ENCODE measurements at regions of chr1 and their contacts with region 1.

Region 1: GRCh38 chr1:221741711-221742554 is at the start of gene DUSP10:
- DNase-seq: peak; percentile 97 to 100 (median 100)
- H3K4me3 ChIP-seq: peak within 1 kb of the TSS; percentile 95 to 96
- H3K4me3 Mint-ChIP-seq: peak within 1 kb of the TSS in 3 of 8 donors; percentile 79 to 87 (median 86)
- H3K27ac ChIP-seq: peak within 1 kb of the TSS; percentile 98
- H3K27ac Mint-ChIP-seq: peak within 1 kb of the TSS in 4 of 7 donors; percentile 72 to 98 (median 92)
- H3K4me1 ChIP-seq: peaks cover 38% of the 10 kb centered on the region
- H3K4me1 Mint-ChIP-seq: peaks cover 0 to 36% (median 17%) of the 10 kb centered on the region in 4 donors
- H3K27me3 ChIP-seq: no peaks in the 10 kb centered on the region
- H3K27me3 Mint-ChIP-seq: no peaks in the 10 kb centered on the region
- total RNA-seq, gene DUSP10: 3.8 to 4.1 TPM

Region 2: GRCh38 chr1:221435504-221435904 is 306.4 kb before region 1 on chr1:
- CTCF ChIA-PET with region 1: interaction called, 3 read pairs
- POLR2A ChIA-PET with region 1: interaction called, 4 read pairs
- intact Hi-C with region 1: loop called (anchors 1 kb)
- DNase-seq: peak in 4 of 5 donors; percentile 34 to 45 (median 36)
- H3K4me3 ChIP-seq: no peak overlapping the region
- H3K4me3 Mint-ChIP-seq: peak overlapping the region in 1 of 8 donors; percentile 22
- H3K27ac ChIP-seq: no peak overlapping the region
- H3K27ac Mint-ChIP-seq: no peak overlapping the region
- H3K4me1 ChIP-seq: peaks cover 16% of the 10 kb centered on the region
- H3K4me1 Mint-ChIP-seq: peaks cover 13 to 29% (median 19%) of the 10 kb centered on the region in 4 donors
- H3K27me3 ChIP-seq: no peaks in the 10 kb centered on the region
- H3K27me3 Mint-ChIP-seq: peaks cover 0 to 4% of the 10 kb centered on the region in 2 donors

Region 3: GRCh38 chr1:221689138-221689537 is 52.8 kb before region 1 on chr1:
- CTCF ChIA-PET with region 1: no interaction called
- POLR2A ChIA-PET with region 1: interaction called, 12 read pairs
- intact Hi-C with region 1: no loop called
- DNase-seq: peak in 3 of 5 donors; percentile 31 to 56 (median 38)
- H3K4me3 ChIP-seq: no peak overlapping the region
- H3K4me3 Mint-ChIP-seq: peak overlapping the region in 1 of 8 donors; percentile 7
- H3K27ac ChIP-seq: no peak overlapping the region
- H3K27ac Mint-ChIP-seq: peak overlapping the region; percentile 11 to 87 (median 67)
- H3K4me1 ChIP-seq: no peaks in the 10 kb centered on the region
- H3K4me1 Mint-ChIP-seq: peaks cover 3 to 13% (median 6%) of the 10 kb centered on the region in 4 donors
- H3K27me3 ChIP-seq: no peaks in the 10 kb centered on the region
- H3K27me3 Mint-ChIP-seq: no peaks in the 10 kb centered on the region

Region 4: DNA sequence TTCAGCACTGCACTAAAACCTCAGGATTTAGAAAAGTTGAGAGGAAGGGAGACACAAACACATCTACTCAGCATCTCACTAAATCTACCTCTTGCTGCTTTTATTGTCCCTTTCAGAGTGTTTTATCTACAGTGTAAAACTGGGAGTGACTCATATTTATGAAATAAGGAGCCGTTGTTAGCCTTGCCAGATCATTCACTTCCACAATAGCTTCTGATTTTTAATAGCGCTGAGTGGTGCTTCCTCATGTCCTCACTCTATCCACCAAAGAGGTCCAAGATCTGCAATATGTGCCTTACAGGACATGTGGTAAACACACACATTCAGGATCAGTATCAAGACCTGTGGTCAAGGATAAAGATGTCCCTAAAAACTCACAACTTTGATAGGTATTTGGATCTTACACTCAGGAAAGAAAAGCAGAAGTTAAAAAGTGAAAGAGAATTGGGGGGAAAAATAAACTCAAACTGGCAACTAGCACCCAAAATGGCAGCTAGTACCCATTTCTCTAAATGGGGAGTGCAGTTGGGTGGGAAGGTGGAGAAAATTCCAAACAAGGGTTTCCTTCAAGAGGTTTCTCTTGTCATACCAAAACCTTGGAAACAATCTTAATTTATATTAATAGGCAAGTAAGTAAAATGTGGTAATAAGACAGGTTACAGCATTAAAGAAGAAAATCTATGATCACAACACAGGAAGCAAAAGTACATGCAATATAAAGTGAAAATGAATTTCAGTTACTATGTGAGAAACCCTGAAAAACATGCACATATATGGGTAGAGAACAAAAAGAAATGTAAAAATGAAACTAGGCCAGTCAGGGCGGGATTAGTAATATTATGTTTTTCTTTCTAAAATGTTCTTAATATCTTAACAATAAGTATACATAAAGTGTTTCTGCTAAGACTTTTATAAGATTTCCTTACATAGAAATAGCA is 15.9 kb before region 1 on chr1:
- CTCF ChIA-PET with region 1: interaction called, 18 read pairs
- POLR2A ChIA-PET with region 1: interaction called, 51 read pairs
- intact Hi-C with region 1: loop called (anchors 1 kb)
- DNase-seq: peak in 4 of 5 donors; percentile 30 to 38 (median 34)
- H3K4me3 ChIP-seq: no peak overlapping the region
- H3K4me3 Mint-ChIP-seq: peak overlapping the region in 7 of 8 donors; percentile 44 to 82 (median 57)
- H3K27ac ChIP-seq: peak overlapping the region; percentile 25
- H3K27ac Mint-ChIP-seq: peak overlapping the region; percentile 7 to 83 (median 48)
- H3K4me1 ChIP-seq: peaks cover 58% of the 10 kb centered on the region
- H3K4me1 Mint-ChIP-seq: peaks cover 36 to 61% (median 48%) of the 10 kb centered on the region in 4 donors
- H3K27me3 ChIP-seq: no peaks in the 10 kb centered on the region
- H3K27me3 Mint-ChIP-seq: no peaks in the 10 kb centered on the region

Region 5: DNA sequence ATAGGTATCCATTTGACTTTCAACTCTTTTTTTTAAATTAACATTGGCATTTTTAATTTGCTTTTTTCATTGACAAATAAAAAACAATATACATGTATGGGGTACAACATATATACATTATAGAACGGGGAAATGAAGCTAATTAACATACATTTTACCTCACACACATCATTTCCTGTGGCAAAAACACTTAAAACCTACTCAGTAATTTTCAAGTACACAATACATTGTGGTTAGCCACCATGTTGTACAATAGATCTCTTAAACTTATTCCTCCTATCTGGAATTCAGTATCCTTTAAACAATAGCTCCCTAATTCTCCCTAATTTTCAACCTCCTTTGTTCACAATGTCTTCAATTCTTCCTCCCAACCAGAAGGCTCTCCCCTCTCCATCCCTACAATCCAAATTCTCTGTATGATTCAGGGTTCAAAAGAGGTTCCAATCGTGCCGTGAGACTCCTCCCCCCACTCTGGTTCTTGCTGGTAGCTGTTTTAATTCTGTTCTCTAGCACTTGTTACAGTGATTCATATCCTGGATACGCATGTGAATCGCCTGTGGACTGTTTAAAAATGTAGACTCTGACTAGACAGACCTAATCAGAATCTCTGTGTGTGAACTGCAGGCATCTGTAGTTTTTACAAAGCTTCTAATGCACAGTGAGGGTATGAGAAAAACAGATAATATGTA is 87.5 kb after region 1 on chr1:
- CTCF ChIA-PET with region 1: interaction called, 3 read pairs
- POLR2A ChIA-PET with region 1: interaction called, 26 read pairs
- intact Hi-C with region 1: loop called (anchors 5 kb)
- DNase-seq: peak; percentile 35 to 77 (median 41)
- H3K4me3 ChIP-seq: peak overlapping the region in 1 of 2 donors; percentile 2
- H3K4me3 Mint-ChIP-seq: peak overlapping the region; percentile 62 to 75 (median 70)
- H3K27ac ChIP-seq: peak overlapping the region; percentile 28
- H3K27ac Mint-ChIP-seq: peak overlapping the region; percentile 86 to 96 (median 93)
- H3K4me1 ChIP-seq: peaks cover 41% of the 10 kb centered on the region
- H3K4me1 Mint-ChIP-seq: peaks cover 27 to 53% (median 43%) of the 10 kb centered on the region in 4 donors
- H3K27me3 ChIP-seq: no peaks in the 10 kb centered on the region
- H3K27me3 Mint-ChIP-seq: no peaks in the 10 kb centered on the region

Region 6: DNA sequence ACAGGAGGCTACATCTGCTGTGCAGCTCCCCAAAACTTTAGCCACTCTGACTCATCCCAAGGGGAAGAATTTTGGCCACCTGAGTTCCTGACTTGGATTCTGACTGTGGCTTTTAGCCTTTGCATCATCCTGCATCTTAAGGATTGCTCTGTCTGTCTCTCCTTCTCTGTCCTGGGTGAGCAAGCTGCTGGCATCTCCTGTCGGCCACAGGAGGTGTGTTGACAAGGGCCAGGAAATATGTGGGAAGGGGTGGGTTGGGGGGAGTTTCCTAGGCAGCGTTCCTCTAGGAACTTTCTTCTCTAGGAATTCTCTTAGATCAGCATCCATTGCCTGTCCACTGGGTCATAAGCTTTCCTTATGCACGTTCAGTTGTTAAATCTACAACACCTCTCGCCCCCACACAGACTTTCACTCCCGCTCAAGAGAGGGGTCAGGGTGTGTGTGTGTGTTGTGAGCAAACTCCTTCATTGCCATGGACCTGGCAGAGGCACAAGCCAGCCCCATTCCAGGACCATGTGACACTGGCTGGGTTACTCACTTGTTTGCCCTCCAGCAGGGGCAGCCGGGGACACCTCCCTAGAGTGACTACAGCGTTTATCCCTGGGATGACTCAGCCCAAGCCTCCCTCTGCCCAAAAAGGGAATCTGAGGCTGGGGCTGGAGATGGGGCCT is 144.9 kb after region 1 on chr1:
- CTCF ChIA-PET with region 1: no interaction called
- POLR2A ChIA-PET with region 1: no interaction called
- intact Hi-C with region 1: no loop called
- DNase-seq: no peak
- H3K4me3 ChIP-seq: no peak overlapping the region
- H3K4me3 Mint-ChIP-seq: no peak overlapping the region
- H3K27ac ChIP-seq: no peak overlapping the region
- H3K27ac Mint-ChIP-seq: no peak overlapping the region
- H3K4me1 ChIP-seq: no peaks in the 10 kb centered on the region
- H3K4me1 Mint-ChIP-seq: no peaks in the 10 kb centered on the region
- H3K27me3 ChIP-seq: no peaks in the 10 kb centered on the region
- H3K27me3 Mint-ChIP-seq: peaks cover 3 to 5% of the 10 kb centered on the region in 2 donors

Region 7: GRCh38 chr1:222084996-222085395 is 343.1 kb after region 1 on chr1:
- CTCF ChIA-PET with region 1: no interaction called
- POLR2A ChIA-PET with region 1: no interaction called
- intact Hi-C with region 1: no loop called
- DNase-seq: no peak
- H3K4me3 ChIP-seq: no peak overlapping the region
- H3K4me3 Mint-ChIP-seq: no peak overlapping the region
- H3K27ac ChIP-seq: no peak overlapping the region
- H3K27ac Mint-ChIP-seq: no peak overlapping the region
- H3K4me1 ChIP-seq: no peaks in the 10 kb centered on the region
- H3K4me1 Mint-ChIP-seq: no peaks in the 10 kb centered on the region
- H3K27me3 ChIP-seq: no peaks in the 10 kb centered on the region
- H3K27me3 Mint-ChIP-seq: peaks cover 1 to 9% of the 10 kb centered on the region in 2 donors

Region 8: GRCh38 chr1:222455188-222455879 is 713.4 kb after region 1 on chr1:
- CTCF ChIA-PET with region 1: interaction called, 7 read pairs
- POLR2A ChIA-PET with region 1: interaction called, 8 read pairs
- intact Hi-C with region 1: loop called (anchors 2 kb)
- DNase-seq: peak; percentile 76 to 81 (median 80)
- H3K4me3 ChIP-seq: no peak overlapping the region
- H3K4me3 Mint-ChIP-seq: peak overlapping the region in 7 of 8 donors; percentile 5 to 69 (median 46)
- H3K27ac ChIP-seq: no peak overlapping the region
- H3K27ac Mint-ChIP-seq: peak overlapping the region in 5 of 7 donors; percentile 2 to 87 (median 24)
- H3K4me1 ChIP-seq: peaks cover 7% of the 10 kb centered on the region
- H3K4me1 Mint-ChIP-seq: peaks cover 7 to 21% (median 18%) of the 10 kb centered on the region in 4 donors
- H3K27me3 ChIP-seq: no peaks in the 10 kb centered on the region
- H3K27me3 Mint-ChIP-seq: peaks cover 0 to 1% of the 10 kb centered on the region in 2 donors

Region 9: DNA sequence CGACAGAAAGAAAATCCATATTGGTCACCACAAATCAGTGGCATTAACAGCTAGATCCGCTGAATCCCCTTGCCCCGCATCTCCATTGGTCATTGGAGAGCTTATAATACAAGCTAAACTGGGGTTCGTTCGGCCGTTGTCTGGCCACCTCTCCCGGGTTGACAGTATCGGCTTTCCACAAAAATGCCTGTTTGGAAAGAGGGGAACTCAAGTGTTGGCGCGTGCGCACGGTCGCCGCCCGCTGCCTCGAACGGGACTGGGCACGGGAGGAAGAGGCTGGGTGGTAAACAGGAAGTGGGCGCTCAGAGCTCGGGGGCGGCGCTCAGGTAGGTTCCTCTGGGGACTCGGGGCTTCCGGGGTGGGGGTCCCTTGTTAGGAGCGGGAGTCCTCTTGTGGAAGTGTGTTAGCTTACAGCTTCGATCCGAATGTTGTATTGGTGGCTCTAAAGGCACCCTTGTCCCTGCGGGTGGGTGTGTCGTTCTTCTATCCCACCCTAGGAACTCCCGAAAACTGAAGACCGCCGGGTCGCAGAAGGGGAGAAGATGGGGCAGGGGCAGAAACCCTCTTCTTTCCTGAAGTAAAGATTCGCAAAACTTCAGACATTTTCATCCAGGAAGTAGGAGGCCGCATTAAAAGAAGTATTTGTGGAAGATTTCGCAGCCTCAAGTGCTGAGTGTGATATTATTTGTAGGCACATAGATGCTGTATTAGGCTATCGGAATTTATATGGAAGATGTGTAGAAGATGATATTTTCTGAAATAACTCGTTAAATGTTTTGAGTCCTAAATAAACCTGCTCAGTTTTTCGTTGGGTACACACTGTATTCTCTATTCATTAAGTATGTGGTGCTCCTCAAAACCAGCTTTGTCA is 971.4 kb after region 1 on chr1:
- CTCF ChIA-PET with region 1: no interaction called
- POLR2A ChIA-PET with region 1: interaction called, 13 read pairs
- intact Hi-C with region 1: loop called (anchors 2 kb)
- DNase-seq: peak; percentile 89 to 95 (median 90)
- H3K4me3 ChIP-seq: peak overlapping the region; percentile 84 to 100
- H3K4me3 Mint-ChIP-seq: peak overlapping the region; percentile 94 to 100 (median 98)
- H3K27ac ChIP-seq: peak overlapping the region; percentile 91
- H3K27ac Mint-ChIP-seq: peak overlapping the region; percentile 98 to 100 (median 100)
- H3K4me1 ChIP-seq: peaks cover 44% of the 10 kb centered on the region
- H3K4me1 Mint-ChIP-seq: peaks cover 29 to 76% (median 48%) of the 10 kb centered on the region in 4 donors
- H3K27me3 ChIP-seq: no peaks in the 10 kb centered on the region
- H3K27me3 Mint-ChIP-seq: no peaks in the 10 kb centered on the region